MCF 10A (cell line): ENCODE measurements at regions of chr2 and their contacts with region 1.

Region 1: DNA sequence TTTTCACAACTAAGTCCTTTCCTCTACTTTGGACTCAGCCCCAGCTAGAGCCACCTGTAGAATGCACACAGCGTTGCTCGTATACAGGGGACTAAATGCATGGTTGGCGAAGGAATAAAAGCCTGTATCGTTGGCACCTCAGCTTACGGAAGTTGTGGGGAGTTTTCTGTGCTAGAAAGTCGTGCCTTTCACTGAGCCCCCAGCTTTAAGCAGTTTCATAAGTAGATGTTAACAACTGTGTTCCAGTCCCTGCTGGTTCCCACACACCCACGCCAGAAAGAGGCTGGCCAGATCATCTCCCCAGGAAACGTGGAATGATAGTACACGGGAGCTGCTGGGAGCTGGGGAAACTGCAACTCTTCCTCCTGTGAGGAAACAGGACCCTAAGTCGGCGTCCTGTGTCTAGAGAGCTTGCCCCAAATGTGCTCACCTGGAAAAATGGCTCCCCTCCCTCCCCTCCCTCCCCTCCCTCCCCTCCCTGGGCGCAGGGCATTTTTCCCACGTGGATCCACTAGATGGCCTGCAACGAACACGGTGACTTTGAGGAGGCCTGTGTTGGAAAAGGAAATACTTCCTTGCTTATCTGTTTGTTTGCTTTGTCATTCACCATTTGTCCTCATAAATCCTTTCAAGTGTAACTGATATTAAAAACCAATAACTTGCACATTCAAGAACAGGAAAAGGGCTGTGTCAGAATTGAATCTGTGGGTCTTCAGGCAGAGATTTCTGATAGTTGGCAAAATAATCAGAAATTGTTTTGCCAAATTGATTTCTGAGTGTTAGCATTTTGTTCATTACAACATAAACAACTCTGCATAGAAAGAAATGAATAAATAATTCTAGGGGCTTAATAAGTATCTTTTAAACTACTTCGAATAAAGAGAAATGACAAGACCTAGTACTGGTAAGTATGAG is 43.9 kb upstream of the RFX8 start:
- DNase-seq: peak; percentile 81
- H3K4me3 Mint-ChIP-seq: peak overlapping the region; percentile 44
- H3K27ac Mint-ChIP-seq: no peak overlapping the region
- H3K4me1 Mint-ChIP-seq: peaks cover 25% of the 10 kb centered on the region
- H3K27me3 Mint-ChIP-seq: no peaks in the 10 kb centered on the region
- CTCF ChIP-seq: peak; percentile 30

Region 2: GRCh38 chr2:101341901-101342624 is 176.8 kb before region 1 on chr2:
- CTCF ChIA-PET with region 1: interaction called, 21 read pairs
- POLR2A ChIA-PET with region 1: interaction called, 10 read pairs
- intact Hi-C with region 1: loop called (anchors 5 kb)
- DNase-seq: peak; percentile 78
- H3K4me3 Mint-ChIP-seq: no peak overlapping the region
- H3K27ac Mint-ChIP-seq: no peak overlapping the region
- H3K4me1 Mint-ChIP-seq: peaks cover 5% of the 10 kb centered on the region
- H3K27me3 Mint-ChIP-seq: no peaks in the 10 kb centered on the region
- CTCF ChIP-seq: peak; percentile 78

Region 3: GRCh38 chr2:101349893-101350662 is 168.8 kb before region 1 on chr2:
- CTCF ChIA-PET with region 1: interaction called, 10 read pairs
- POLR2A ChIA-PET with region 1: no interaction called
- intact Hi-C with region 1: no loop called
- DNase-seq: peak; percentile 20
- H3K4me3 Mint-ChIP-seq: no peak overlapping the region
- H3K27ac Mint-ChIP-seq: no peak overlapping the region
- H3K4me1 Mint-ChIP-seq: peaks cover 6% of the 10 kb centered on the region
- H3K27me3 Mint-ChIP-seq: no peaks in the 10 kb centered on the region
- CTCF ChIP-seq: no peak

Region 4: DNA sequence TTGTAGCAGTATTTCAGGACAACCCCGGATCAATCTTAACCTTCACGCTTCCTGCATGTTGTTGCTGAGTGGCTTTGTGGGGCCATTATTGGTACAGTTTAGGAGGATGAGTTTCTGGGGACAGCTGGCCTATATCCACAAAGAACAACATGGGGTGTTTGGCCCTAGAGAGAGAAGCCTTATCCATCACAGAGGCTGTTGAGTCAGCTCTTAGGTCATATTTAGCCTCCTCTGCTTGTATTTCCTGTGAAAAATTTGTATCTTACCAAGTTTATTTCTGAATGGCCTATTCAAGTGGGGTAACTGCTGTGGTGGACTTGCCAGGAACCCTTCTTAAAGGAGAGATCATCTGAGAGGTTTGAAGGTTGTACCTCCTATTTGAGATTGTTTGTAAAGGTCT is 256.3 kb after region 1 on chr2:
- CTCF ChIA-PET with region 1: no interaction called
- POLR2A ChIA-PET with region 1: no interaction called
- intact Hi-C with region 1: no loop called
- DNase-seq: no peak
- H3K4me3 Mint-ChIP-seq: no peak overlapping the region
- H3K27ac Mint-ChIP-seq: no peak overlapping the region
- H3K4me1 Mint-ChIP-seq: peaks cover 33% of the 10 kb centered on the region
- H3K27me3 Mint-ChIP-seq: no peaks in the 10 kb centered on the region
- CTCF ChIP-seq: no peak